Calu3 (cell line): ENCODE measurements at regions of chr16 and their contacts with region 1.

Region 1: DNA sequence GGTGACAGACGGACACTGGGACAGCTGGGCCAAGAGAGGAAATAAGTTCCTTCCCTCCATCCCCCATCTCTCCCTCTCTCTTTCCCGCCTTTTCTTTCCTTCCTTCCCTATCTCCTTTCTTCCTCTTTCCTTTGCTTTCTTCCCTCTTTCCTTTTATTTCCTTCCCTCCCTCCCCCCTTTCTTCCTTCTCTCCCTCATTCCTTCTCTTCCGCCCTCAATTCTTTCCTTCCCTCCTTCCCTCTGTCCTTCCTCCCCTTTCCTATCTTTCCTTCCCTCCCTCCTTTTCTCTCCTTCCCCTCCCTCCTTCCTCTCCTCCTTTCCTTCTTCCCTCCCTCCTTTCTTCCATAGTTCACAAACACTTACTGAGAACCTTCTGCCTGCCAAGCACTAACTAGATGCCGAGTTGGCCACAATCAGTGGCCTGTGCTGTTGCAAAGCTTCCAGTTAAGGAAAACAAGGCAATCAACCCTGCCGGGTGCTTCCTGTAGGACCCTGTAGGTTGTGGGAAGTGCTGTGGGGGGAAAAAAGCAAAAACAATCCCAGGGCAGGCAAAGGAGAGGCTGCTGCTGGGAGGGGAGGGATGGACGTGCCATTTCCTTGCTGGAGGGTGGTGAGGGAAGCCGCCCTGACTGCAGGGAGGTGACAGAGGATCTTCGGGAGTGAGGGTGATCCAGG is 31.7 kb downstream of the ABCC6 start:
- DNase-seq: no peak
- H3K4me3 Mint-ChIP-seq: no peak overlapping the region
- H3K27ac Mint-ChIP-seq: no peak overlapping the region
- H3K4me1 Mint-ChIP-seq: no peaks in the 10 kb centered on the region
- H3K27me3 Mint-ChIP-seq: peaks cover 23% of the 10 kb centered on the region
- CTCF ChIP-seq: no peak

Region 2: DNA sequence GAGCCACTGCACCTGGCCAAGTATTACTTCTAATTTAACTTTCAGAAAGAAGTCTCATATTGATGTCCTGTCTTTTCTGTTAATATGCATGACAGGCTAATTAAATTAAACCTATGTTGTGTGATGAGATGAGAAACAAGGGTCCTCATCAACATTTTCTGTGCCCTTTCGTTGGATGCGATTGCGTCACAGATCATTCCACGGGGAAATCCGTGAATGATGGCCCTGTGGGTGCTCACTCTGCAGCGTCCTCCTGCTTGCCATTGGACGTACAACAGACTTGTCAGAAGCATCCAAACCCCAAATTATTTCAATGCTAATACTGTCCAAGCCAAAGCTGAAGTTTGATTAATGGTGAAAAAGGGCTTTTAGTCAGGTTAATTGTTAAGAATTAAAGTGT is 1923.6 kb before region 1 on chr16:
- CTCF ChIA-PET with region 1: interaction called, 13 read pairs
- intact Hi-C with region 1: no loop called
- DNase-seq: no peak
- H3K4me3 Mint-ChIP-seq: no peak overlapping the region
- H3K27ac Mint-ChIP-seq: no peak overlapping the region
- H3K4me1 Mint-ChIP-seq: no peaks in the 10 kb centered on the region
- H3K27me3 Mint-ChIP-seq: no peaks in the 10 kb centered on the region
- CTCF ChIP-seq: no peak

Region 3: DNA sequence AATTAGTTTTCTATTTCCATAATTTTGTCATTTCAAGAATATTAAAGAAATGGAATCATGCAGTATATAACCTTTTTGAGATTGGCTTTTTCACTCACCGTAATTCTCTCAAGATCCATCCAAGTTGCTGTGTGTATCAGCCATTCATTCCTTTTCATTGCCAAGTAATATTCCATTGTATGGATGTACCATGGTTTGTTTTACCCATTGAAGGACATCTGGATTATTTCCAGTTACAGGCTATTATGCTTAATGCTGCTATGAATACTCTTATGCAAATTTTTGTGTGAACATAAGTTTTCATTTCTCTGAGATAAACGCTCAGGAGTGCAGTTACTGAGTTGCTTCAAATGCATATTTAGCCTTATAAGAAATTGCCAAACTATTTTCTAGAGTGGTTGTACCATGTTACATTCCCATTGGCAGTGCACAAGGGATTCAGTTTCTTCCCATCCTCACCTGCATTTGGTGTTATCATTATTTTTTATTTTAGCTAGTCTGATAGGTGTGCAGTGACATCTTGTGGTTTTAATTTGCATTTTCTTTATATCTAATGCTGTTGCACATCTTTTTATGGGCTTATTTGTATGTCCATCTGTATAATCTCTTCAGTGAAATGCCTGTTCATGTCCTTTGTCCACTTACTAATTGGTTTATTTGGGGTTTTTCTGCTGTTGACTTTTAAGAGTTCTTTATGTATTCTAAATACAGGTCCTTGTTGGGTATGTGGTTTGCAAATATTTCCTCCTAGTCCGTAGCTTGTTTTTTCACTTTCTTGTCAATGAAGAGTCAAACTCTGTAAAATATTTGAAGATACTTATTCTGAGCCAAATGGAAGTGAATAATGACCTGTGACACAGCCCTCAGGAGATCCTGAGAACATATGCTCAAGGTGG is 724.5 kb before region 1 on chr16:
- CTCF ChIA-PET with region 1: no interaction called
- intact Hi-C with region 1: no loop called
- DNase-seq: no peak
- H3K4me3 Mint-ChIP-seq: no peak overlapping the region
- H3K27ac Mint-ChIP-seq: no peak overlapping the region
- H3K4me1 Mint-ChIP-seq: peaks cover 8% of the 10 kb centered on the region
- H3K27me3 Mint-ChIP-seq: no peaks in the 10 kb centered on the region
- CTCF ChIP-seq: peak; percentile 50

Region 4: DNA sequence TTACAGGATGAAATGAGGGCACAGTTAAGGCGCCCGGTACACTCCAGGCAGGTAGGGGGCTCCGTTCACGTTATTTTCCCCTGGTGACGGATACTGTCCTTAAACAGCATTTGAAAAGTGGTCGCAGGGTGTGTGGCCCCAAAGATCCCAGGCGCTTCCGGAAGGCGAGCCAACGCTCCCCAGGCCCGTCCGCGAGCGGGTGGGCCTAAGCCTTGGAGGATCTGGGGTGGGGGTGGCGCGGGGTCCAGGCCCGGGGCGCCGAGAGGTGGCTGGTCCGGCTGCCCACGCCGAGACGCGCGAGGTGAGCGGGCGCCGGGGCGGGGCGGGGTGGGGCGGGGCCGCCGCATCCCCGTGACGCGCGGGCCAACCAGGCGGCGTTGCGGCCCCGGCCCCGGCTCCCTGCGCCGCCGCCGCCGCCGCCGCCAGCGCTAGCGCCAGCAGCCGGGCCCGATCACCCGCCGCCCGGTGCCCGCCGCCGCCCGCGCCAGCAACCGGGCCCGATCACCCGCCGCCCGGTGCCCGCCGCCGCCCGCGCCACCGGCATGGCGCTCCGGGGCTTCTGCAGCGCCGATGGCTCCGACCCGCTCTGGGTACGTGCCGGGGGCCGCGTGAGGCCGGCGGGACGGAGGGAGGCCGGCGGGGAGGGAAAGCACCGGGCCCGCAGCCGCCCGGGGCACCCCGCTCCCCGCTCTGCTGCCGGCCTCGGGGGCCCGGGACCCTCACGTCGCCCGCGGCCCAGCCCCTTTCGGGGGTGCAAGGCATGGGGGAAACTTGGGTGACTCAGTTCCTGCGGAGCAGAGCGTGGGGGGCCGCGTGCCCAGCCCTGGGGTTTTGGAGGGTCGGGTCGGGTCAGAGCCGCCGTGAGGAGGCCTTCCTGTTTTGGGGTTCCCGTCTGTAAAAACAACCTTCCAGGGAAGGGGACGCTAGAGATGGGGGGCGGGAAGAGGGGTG is 242.1 kb before region 1 on chr16 and contains the start of gene ABCC1:
- CTCF ChIA-PET with region 1: no interaction called
- intact Hi-C with region 1: no loop called
- DNase-seq: peak; percentile 59
- H3K4me3 Mint-ChIP-seq: peak within 1 kb of the TSS; percentile 90
- H3K27ac Mint-ChIP-seq: peak within 1 kb of the TSS; percentile 79
- H3K4me1 Mint-ChIP-seq: peaks cover 48% of the 10 kb centered on the region
- H3K27me3 Mint-ChIP-seq: no peaks in the 10 kb centered on the region
- CTCF ChIP-seq: no peak
- total RNA-seq, gene ABCC1: 46.3 and 46.4 TPM in 2 replicates

Region 5: DNA sequence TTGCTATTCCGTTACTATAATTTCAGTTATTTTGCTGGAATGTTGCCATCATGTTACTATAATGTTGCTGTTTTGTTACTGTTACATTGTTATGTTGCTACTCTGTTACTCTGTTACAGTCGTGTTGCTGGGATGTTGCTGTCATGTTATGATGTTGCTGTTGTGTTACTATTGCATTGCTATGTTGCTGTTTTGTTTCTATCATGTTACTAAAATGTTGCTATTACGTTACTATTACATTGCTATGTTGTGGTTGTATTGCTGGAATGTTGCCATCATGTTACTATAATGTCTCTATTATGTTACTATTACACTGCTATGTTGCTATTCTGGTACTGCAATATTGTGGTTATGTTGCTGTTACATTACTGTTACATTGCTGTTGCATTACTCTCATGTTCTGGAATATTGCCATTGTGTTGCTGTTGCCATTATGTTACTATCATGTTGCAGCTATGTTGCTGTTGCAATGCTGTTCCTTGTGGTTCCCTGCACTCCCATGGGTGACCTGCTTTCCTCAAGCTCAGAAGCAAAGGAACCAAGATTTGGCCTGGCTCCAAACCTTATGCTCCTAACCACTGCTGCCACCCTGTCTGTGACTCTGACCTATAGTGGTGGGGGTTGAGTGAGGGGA is 32.8 kb before region 1 on chr16:
- CTCF ChIA-PET with region 1: no interaction called
- intact Hi-C with region 1: no loop called
- DNase-seq: no peak
- H3K4me3 Mint-ChIP-seq: no peak overlapping the region
- H3K27ac Mint-ChIP-seq: no peak overlapping the region
- H3K4me1 Mint-ChIP-seq: no peaks in the 10 kb centered on the region
- H3K27me3 Mint-ChIP-seq: peaks cover 15% of the 10 kb centered on the region
- CTCF ChIP-seq: no peak